ENCODE measurements at regions of chr12 and their contacts with region 1.

Region 1: GRCh38 chr12:114508529-114509129 is 102.7 kb upstream of the TBX5 start:
- DNase-seq: peak; percentile 64 to 78 (median 66)
- ATAC-seq: peak; percentile 85
- H3K4me3 ChIP-seq: no peak overlapping the region
- H3K27ac ChIP-seq: no peak overlapping the region
- H3K4me1 ChIP-seq: no peaks in the 10 kb centered on the region
- H3K27me3 ChIP-seq: no peaks in the 10 kb centered on the region
- CTCF ChIP-seq: peak; percentile 67 to 77 (median 68)
- EP300 ChIP-seq: no peak
- POLR2A ChIP-seq: no peak
- RAD21 ChIP-seq: peak; percentile 47 to 75

Region 2: DNA sequence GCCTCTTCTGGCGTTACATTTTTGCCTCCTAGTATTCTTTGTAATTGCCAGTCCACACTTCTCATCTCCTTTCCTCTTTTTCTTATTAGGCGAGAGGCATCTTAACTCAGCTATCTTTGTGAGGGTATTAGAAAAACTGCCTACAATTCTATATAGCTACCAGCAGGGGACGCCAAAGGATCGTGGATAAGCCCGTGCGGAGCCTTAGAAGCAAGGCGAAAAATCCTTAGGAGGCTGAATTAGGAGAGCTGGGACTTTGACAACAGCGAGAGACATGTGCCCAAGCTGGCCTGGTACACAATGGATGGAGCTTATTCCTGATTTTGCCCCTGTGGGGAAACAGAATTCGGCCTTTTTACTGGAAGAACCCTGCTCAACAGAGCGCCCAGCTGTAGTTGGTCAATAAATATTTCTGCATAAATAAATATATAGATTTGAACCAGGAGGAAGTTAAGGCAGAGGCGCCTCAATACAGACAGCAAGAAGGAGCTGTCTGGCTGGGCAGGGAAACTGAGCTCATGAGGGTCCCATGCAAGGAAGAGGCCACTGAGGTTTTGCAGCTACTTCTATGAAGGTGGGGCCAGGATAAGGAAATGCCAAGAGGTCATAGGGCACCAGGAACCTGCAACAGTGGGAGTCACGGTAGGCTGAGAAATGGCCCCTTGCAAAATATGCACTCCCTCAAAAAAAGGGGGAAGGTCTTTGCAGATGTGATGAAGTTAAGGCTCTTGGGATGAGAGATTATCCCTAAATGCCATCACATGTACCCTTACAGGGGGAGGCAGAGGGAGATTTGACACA is 527.9 kb before region 1 on chr12:
- CTCF ChIA-PET with region 1: interaction called, 16 read pairs
- POLR2A ChIA-PET with region 1: no interaction called
- in situ Hi-C with region 1: loop called (anchors 10 kb)
- intact Hi-C with region 1: loop called (anchors 1 kb)
- DNase-seq: peak; percentile 62 to 79 (median 66)
- ATAC-seq: peak; percentile 89
- H3K4me3 ChIP-seq: no peak overlapping the region
- H3K27ac ChIP-seq: no peak overlapping the region
- H3K4me1 ChIP-seq: no peaks in the 10 kb centered on the region
- H3K27me3 ChIP-seq: no peaks in the 10 kb centered on the region; a peak in 1 of 5 replicates
- CTCF ChIP-seq: peak; percentile 87 to 98 (median 94)
- EP300 ChIP-seq: no peak
- POLR2A ChIP-seq: no peak
- RAD21 ChIP-seq: peak; percentile 85 to 94

Region 3: DNA sequence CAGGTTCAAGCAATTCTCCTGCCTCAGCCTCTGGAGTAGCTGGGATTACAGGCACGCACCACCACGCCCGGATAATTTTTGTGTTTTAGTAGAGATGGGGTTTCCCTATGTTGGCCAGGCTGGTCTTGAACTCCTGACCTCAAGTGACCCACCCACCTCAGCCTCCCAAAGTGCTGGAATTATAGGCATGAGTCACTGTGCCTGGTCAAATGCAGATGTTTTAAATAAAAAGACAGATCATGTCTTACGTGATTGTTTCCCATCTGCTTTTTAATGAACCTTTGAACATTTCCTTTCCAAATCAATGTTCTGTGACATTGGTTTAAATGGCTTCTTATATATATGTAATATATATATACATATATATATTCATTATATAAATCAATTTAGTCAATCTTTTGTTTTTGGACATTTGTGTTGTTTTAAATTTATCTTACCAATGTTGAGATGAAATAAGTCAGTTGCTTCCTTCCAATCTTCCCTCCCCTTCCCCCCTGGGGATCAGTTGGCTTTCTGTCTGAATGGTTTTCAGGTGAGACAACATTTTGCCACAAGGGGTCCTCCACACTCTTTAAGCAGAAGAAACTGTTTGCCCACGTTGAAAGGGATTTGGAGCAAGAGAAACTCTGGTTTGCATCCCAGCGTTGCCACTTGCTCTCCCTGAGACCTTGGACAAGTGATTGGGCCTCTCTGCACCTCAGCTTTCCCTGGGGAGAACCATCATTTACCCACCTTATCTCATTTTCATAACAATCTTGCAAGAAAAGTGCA is 494.9 kb before region 1 on chr12:
- CTCF ChIA-PET with region 1: interaction called, 3 read pairs
- POLR2A ChIA-PET with region 1: no interaction called
- in situ Hi-C with region 1: loop called (anchors 10 kb)
- intact Hi-C with region 1: no loop called
- DNase-seq: peak; percentile 14 to 38 (median 29)
- ATAC-seq: no peak
- H3K4me3 ChIP-seq: no peak overlapping the region
- H3K27ac ChIP-seq: no peak overlapping the region
- H3K4me1 ChIP-seq: no peaks in the 10 kb centered on the region
- H3K27me3 ChIP-seq: peaks cover 0 to 8% of the 10 kb centered on the region in 2 experiments; a peak in 2 of 5 replicates
- CTCF ChIP-seq: peak; percentile 32 to 41 (median 41); a peak in 3 of 6 replicates
- EP300 ChIP-seq: no peak
- POLR2A ChIP-seq: no peak
- RAD21 ChIP-seq: peak in 1 of 2 experiments; percentile 47; a peak in 1 of 4 replicates

Region 4: DNA sequence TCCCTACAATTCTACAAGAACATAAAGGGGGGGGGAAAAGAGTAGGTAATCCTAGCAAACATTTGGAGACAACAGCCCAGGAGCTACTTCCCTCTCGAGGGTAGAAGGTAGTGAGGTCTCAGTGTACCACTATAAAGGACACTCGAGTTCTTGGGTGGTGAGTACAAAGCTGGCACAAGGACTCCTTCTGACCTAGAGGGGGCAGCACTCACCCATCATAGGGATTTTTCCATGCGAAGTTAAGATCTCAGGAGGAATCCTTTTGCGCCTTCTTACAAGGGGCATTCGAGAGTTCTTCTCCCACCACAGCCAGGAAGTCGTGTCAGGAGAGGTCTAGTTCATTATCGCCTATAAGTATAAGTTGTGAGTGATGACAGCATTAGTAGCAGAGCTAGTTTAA is 342.3 kb before region 1 on chr12:
- CTCF ChIA-PET with region 1: no interaction called
- POLR2A ChIA-PET with region 1: no interaction called
- in situ Hi-C with region 1: loop called (anchors 10 kb)
- intact Hi-C with region 1: loop called (anchors 1 kb)
- DNase-seq: peak; percentile 43 to 58 (median 52)
- ATAC-seq: peak; percentile 68
- H3K4me3 ChIP-seq: no peak overlapping the region
- H3K27ac ChIP-seq: no peak overlapping the region
- H3K4me1 ChIP-seq: no peaks in the 10 kb centered on the region
- H3K27me3 ChIP-seq: no peaks in the 10 kb centered on the region; a peak in 2 of 5 replicates
- CTCF ChIP-seq: peak; percentile 53 to 64 (median 57)
- EP300 ChIP-seq: no peak
- POLR2A ChIP-seq: no peak
- RAD21 ChIP-seq: peak; percentile 38 to 70

Region 5: GRCh38 chr12:114174326-114174725 is 334.3 kb before region 1 on chr12:
- CTCF ChIA-PET with region 1: no interaction called
- POLR2A ChIA-PET with region 1: no interaction called
- in situ Hi-C with region 1: loop called (anchors 10 kb)
- intact Hi-C with region 1: no loop called
- DNase-seq: no peak
- ATAC-seq: no peak
- H3K4me3 ChIP-seq: no peak overlapping the region
- H3K27ac ChIP-seq: no peak overlapping the region
- H3K4me1 ChIP-seq: no peaks in the 10 kb centered on the region
- H3K27me3 ChIP-seq: no peaks in the 10 kb centered on the region; a peak in 2 of 5 replicates
- CTCF ChIP-seq: no peak
- EP300 ChIP-seq: no peak
- POLR2A ChIP-seq: no peak
- RAD21 ChIP-seq: no peak

Region 6: GRCh38 chr12:114403011-114403689 is 105.5 kb before region 1 on chr12:
- CTCF ChIA-PET with region 1: no interaction called
- POLR2A ChIA-PET with region 1: no interaction called
- in situ Hi-C with region 1: no loop called
- intact Hi-C with region 1: no loop called
- DNase-seq: no peak
- ATAC-seq: peak; percentile 38; the same call in 2 of the 3 replicates
- H3K4me3 ChIP-seq: no peak overlapping the region
- H3K27ac ChIP-seq: no peak overlapping the region
- H3K4me1 ChIP-seq: peaks cover 0 to 7% of the 10 kb centered on the region in 2 experiments; a peak in 2 of 5 replicates
- H3K27me3 ChIP-seq: peaks cover 55 to 86% of the 10 kb centered on the region in 2 experiments
- CTCF ChIP-seq: no peak
- EP300 ChIP-seq: no peak
- POLR2A ChIP-seq: no peak
- RAD21 ChIP-seq: no peak

Region 7: DNA sequence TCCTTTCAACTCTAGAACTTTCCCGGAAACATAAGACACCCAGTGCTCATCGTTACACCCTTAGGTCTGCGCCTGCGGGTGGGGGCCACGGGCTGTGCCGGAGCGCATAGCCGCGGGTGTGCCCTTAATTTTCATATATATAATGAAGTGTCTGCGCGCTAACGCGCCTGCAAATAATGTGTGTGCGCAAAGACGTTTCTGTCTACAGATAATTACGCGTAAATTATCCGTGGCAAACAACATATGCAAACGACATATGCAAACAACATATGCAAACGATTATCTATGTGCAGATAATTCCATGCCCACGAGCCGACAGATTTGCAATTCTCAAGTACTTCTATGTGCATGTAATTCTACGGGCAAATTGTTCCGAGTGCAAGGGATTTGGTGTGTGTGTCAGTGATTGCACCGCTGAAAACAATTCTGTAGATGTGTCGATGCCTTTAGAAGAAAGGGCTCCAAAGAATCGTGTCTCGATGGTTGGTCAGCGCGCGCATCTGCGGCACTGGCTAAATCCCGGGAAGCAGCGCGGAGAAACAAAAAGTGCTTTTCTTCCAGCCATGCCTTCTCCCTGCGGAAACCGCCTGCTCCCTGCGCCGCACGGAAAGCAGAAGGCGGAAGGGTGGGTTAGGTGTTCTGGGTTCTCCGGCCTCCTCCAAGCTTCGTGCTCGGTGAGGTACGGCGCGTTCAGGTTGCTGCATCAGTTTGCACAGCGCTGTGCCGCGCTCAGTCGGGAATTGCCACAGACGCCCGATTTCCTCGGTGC is 68.2 kb before region 1 on chr12:
- CTCF ChIA-PET with region 1: no interaction called
- POLR2A ChIA-PET with region 1: no interaction called
- in situ Hi-C with region 1: no loop called
- intact Hi-C with region 1: no loop called
- DNase-seq: no peak
- ATAC-seq: no peak
- H3K4me3 ChIP-seq: no peak overlapping the region
- H3K27ac ChIP-seq: no peak overlapping the region
- H3K4me1 ChIP-seq: peaks cover 0 to 5% of the 10 kb centered on the region in 2 experiments; a peak in 1 of 5 replicates
- H3K27me3 ChIP-seq: peaks cover 21 to 50% of the 10 kb centered on the region in 2 experiments; a peak in 4 of 5 replicates
- CTCF ChIP-seq: no peak
- EP300 ChIP-seq: no peak
- POLR2A ChIP-seq: no peak
- RAD21 ChIP-seq: no peak

Region 8: DNA sequence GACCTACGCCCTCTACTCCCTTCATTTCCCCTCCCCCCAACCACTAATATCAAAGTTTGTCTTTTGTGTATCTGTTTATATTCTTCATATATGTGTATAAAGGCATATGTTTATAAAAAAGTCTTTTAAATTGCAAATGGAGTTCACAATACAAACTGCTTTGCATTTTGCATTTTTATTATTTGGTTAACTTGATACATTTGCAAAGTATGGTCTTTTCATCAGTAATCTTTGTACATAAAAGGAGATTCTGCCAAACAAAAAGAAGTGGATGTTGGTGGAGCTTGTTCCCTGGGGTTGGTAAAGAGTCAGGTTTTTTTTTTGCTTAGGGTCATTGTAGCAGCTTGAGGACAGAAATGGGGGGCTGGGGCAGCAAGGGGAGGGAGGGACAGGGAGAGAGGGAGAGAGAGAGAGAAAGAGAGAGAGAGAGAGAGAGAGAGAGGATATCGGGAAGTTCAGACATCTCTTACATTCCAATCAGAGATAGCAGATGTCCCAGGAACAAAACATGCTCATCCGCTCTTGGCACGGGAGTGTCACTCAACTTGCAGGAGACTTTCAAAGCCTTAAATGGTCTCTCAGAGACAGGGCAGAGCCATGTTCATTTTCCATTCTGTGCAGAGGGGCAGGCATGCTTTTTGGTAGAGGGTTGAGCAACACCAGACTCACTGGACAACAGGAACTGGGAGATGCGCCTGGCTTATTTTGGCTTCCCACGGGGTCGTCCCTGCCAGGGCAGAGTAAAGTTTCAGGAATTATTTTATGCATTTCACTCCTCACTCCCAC is 57.9 kb before region 1 on chr12:
- CTCF ChIA-PET with region 1: no interaction called
- POLR2A ChIA-PET with region 1: no interaction called
- in situ Hi-C with region 1: no loop called
- intact Hi-C with region 1: no loop called
- DNase-seq: no peak
- ATAC-seq: no peak
- H3K4me3 ChIP-seq: no peak overlapping the region
- H3K27ac ChIP-seq: no peak overlapping the region
- H3K4me1 ChIP-seq: peaks cover 0 to 12% of the 10 kb centered on the region in 2 experiments; a peak in 2 of 5 replicates
- H3K27me3 ChIP-seq: peaks cover 15 to 39% of the 10 kb centered on the region in 2 experiments; a peak in 4 of 5 replicates
- CTCF ChIP-seq: no peak
- EP300 ChIP-seq: no peak
- POLR2A ChIP-seq: no peak
- RAD21 ChIP-seq: no peak

Measured in K562 (cell line).